Left ventricle myocardium superior (tissue), 1 donor: ENCODE measurements at regions of chr10 and their contacts with region 1.

Region 1: DNA sequence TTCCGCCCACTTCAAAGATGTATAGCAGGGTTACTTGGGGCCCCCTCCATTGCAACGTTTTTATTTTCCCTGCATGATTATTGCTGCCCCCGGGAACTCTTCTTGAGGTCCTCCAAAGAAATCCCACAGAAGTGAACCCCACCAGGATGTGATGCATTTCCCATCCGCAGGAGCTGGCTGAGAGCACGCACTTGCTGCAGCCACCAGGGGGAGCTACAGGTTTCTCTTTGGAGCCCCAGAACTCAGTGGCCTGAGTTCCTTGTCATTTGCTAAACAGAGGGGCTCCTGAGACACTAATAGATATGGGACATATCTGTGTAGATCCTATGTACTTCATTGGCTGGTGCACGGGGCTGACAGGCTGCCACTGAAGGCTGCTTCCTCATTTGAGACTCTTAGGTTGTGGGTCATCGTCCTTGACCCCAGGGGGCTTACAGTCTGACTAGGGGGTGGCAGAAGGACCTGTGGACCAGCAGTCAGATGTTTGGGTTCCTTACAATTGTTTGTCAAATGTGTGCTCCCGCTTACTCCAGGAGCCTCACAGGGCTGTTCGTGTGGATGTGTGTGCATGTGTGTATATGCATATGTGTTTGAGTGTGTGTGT is 52.3 kb upstream of the ENO4 start:
- DNase-seq: peak; percentile 79
- ATAC-seq: peak; percentile 78

Region 2: DNA sequence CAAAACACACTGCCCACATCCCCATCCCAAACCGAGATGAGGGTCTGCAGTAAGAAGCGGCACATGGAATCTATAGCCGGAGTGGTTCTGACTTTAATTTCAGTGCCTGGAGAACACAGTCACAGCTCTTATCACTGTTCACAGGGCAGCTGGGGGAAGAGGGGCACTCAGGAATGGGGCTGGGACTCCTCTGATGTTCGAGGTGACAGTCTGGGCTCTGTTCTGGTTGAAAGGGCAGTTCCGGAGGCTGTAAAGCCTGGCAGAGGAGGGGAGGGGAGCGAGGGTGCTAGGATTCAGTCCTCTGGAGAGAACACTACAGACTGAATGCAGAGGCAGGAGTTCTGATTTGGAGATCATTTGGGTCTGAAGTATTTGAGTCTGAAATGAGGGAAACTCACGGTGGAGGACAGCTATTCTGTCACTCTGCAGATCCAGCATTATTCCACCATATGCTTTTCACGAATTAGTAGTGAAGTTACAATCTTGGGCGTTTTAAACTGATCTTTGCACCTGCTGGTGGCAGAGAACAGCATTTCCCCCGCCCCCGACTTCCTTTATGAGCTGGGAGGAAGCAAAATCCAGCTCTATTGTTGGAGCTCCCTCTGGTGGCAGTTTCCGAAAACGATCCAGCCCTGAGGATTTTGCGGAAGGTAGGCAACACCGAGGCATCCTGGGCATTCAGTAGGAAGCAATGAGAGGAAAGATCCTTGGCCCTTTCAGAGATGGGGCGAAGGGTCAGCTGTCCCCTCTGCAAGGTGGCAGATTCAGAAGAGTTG is 377.6 kb after region 1 on chr10:
- intact Hi-C with region 1: loop called (anchors 5 kb)
- DNase-seq: peak; percentile 66
- ATAC-seq: peak; percentile 95

Region 3: DNA sequence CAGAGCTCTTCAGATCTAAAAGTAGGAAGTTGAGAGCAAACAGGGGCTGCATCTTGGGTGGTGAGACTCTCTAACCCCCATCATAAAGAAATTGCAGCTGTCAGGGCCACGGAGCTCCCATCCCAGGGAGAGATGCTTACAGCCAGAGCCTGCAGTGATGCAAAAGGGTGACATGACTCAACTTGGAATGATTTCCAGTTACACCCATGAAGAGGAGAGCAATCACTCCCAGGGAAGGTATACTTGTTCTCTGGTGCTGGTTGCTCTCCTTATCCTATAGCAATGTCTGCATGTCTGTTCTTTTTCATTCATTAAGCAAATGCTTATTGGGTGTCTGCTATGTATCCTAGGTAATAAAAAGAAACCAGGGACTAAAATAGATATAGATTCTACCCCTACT is 1021.7 kb after region 1 on chr10:
- intact Hi-C with region 1: no loop called
- DNase-seq: no peak
- ATAC-seq: no peak